Endothelial cell of umbilical vein (primary cell): ENCODE measurements at regions of chr3 and their contacts with region 1.

Region 1: GRCh38 chr3:128584412-128585020 is 66.1 kb downstream of the RPN1 start:
- DNase-seq: peak; percentile 83
- H3K4me3 ChIP-seq: no peak overlapping the region
- H3K27ac ChIP-seq: no peak overlapping the region
- H3K4me1 ChIP-seq: no peaks in the 10 kb centered on the region
- H3K27me3 ChIP-seq: peaks cover 8 to 19% of the 10 kb centered on the region in 2 experiments
- CTCF ChIP-seq: peak; percentile 90 to 92
- POLR2A ChIP-seq: no peak

Region 2: DNA sequence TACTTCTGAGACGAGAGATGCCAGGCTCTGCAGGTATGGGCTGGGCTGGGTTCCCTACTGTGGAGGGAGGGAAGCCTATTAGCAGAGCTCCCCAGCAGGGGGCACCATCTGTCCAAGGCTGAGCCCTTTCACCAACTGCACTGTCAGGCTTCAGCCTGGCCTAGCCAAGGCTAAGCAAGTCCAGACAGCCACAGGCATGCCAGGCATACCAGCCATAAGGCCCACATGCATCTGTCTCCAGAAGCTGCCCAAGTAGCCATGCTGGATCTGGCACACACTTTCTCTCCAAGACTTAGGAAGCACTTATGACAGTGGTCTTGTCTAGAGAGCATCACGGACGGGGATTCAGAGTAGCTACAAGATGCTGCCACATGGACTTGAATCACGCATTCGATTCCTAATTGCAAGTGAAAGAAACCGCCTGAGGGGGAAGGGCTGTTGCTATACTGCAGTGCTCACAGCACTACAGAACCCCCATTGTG is 489.3 kb before region 1 on chr3:
- CTCF ChIA-PET with region 1: interaction called, 13 read pairs
- POLR2A ChIA-PET with region 1: no interaction called
- dilution Hi-C with region 1: no loop called
- intact Hi-C with region 1: no loop called
- DNase-seq: peak; percentile 83
- H3K4me3 ChIP-seq: no peak overlapping the region
- H3K27ac ChIP-seq: peak overlapping the region; percentile 30
- H3K4me1 ChIP-seq: peaks cover 15% of the 10 kb centered on the region
- H3K27me3 ChIP-seq: no peaks in the 10 kb centered on the region
- CTCF ChIP-seq: peak; percentile 89 to 92
- POLR2A ChIP-seq: no peak

Region 3: DNA sequence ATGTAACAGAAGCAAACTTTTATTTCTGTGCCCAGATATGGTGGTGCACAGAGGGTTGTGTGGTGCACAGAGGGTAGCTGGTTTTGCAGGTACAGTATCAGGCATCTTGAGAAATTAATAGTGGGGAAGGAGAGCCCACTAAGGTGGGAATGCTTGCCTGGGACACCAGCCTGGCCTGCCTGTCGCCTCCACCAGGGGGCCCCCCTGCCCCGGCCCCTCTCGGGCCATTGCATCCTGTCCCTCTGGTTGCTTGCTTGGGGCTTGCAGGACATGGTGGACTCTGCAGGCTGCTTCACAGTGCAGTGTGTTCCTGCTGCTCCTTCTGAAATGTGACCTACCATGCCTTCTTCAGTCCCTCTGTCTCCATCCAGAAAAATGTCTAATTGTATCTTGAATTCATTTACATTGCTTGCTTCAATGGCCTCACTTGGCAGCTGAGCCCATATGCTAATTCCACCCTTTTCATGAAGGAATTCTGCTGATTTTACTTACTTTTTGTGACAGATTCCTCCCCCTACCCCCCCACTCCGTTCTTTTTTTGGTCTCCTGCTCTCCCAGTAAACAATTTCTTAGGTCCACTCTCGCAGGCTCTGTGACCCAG is 357.6 kb before region 1 on chr3:
- CTCF ChIA-PET with region 1: interaction called, 16 read pairs
- POLR2A ChIA-PET with region 1: no interaction called
- dilution Hi-C with region 1: no loop called
- intact Hi-C with region 1: loop called (anchors 1 kb)
- DNase-seq: peak; percentile 59
- H3K4me3 ChIP-seq: no peak overlapping the region
- H3K27ac ChIP-seq: no peak overlapping the region
- H3K4me1 ChIP-seq: no peaks in the 10 kb centered on the region
- H3K27me3 ChIP-seq: no peaks in the 10 kb centered on the region
- CTCF ChIP-seq: peak; percentile 89 to 98
- POLR2A ChIP-seq: no peak

Region 4: DNA sequence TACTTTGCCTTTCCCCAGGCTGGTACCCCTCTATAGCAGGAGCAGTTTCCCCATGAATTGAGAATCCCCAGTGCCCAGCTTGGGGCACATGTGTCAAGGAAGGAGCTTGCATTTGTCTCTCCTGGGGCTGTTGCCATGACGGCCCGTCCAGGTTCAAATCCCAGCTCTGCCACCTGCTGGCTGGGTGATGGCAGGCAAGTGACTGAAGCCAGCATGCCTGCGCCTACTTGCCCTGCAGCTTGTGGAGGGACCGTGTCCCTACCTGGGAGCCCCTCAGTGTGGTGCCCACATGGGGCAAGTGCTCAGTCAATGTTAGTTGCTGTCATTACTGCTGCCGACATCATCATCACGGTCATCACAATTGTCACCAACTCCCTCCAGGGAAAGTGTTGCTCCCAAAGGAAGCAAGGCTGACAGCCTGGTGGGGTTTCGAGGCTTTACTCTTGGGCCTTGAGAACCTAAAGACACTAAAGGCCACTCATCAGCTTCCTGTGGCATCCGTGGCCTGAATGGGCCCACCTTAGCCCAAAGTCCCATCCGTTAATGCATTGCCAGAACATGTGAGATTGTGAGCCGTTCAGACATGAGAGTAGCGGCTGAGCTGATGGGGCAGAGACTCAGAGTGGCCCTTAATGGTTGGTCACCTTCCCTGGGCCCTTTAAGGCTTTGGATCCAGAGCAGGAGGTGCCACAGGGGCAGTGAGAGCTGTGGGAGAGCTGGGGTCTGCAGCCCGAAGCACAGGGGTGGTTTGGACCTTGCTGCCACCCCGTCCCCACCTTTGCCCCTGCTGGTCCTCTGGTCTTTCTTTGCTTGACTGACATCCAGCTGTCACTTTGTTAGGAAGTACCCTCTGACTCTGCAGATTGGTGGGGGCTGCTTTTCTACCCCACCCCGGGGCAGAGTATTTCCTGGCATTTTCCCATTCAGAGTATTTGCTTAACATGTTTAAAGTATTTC is 262.2 kb before region 1 on chr3:
- CTCF ChIA-PET with region 1: interaction called, 7 read pairs
- POLR2A ChIA-PET with region 1: no interaction called
- dilution Hi-C with region 1: no loop called
- intact Hi-C with region 1: loop called (anchors 10 kb)
- DNase-seq: peak; percentile 42
- H3K4me3 ChIP-seq: no peak overlapping the region
- H3K27ac ChIP-seq: no peak overlapping the region
- H3K4me1 ChIP-seq: no peaks in the 10 kb centered on the region
- H3K27me3 ChIP-seq: no peaks in the 10 kb centered on the region
- CTCF ChIP-seq: peak; percentile 59 to 75
- POLR2A ChIP-seq: no peak

Region 5: GRCh38 chr3:128482666-128483656 is 101.6 kb before region 1 on chr3:
- CTCF ChIA-PET with region 1: interaction called, 19 read pairs
- POLR2A ChIA-PET with region 1: no interaction called
- dilution Hi-C with region 1: no loop called
- intact Hi-C with region 1: loop called (anchors 1 kb)
- DNase-seq: peak; percentile 99
- H3K4me3 ChIP-seq: peak overlapping the region in 2 of 3 experiments; percentile 77 to 95
- H3K27ac ChIP-seq: peak overlapping the region; percentile 97
- H3K4me1 ChIP-seq: peaks cover 52% of the 10 kb centered on the region
- H3K27me3 ChIP-seq: no peaks in the 10 kb centered on the region
- CTCF ChIP-seq: peak in 1 of 2 donors; percentile 8
- POLR2A ChIP-seq: peak; percentile 89

Region 6: GRCh38 chr3:128497387-128498126 is 87.0 kb before region 1 on chr3:
- CTCF ChIA-PET with region 1: interaction called, 20 read pairs
- POLR2A ChIA-PET with region 1: no interaction called
- dilution Hi-C with region 1: no loop called
- intact Hi-C with region 1: loop called (anchors 1 kb)
- DNase-seq: peak; percentile 52
- H3K4me3 ChIP-seq: peak overlapping the region in 2 of 3 experiments; percentile 16 to 33
- H3K27ac ChIP-seq: no peak overlapping the region
- H3K4me1 ChIP-seq: peaks cover 13% of the 10 kb centered on the region
- H3K27me3 ChIP-seq: no peaks in the 10 kb centered on the region
- CTCF ChIP-seq: peak; percentile 65 to 81
- POLR2A ChIP-seq: no peak

Region 7: DNA sequence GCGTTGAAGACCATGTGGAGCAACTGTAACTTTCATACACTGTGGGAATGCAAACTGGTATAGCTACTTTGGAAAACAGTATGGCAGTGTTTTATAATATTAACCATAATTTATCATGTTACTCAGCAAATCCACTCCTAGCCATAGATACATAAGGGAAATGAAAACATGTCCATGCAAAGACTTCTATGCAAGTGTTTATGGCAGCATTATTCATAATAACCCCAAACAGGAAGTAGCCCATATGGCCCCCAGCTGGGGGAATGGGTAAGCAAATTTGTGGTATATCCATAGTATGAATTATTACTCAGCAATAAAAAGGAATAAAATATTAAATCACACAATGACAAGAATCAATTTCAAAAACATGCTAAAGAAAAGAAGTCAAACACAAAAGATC is 68.5 kb before region 1 on chr3:
- CTCF ChIA-PET with region 1: no interaction called
- POLR2A ChIA-PET with region 1: no interaction called
- dilution Hi-C with region 1: no loop called
- intact Hi-C with region 1: no loop called
- DNase-seq: no peak
- H3K4me3 ChIP-seq: no peak overlapping the region
- H3K27ac ChIP-seq: no peak overlapping the region
- H3K4me1 ChIP-seq: no peaks in the 10 kb centered on the region
- H3K27me3 ChIP-seq: peaks cover 25 to 35% of the 10 kb centered on the region in 2 experiments
- CTCF ChIP-seq: no peak
- POLR2A ChIP-seq: no peak

Region 8: GRCh38 chr3:128835096-128835495 is 250.6 kb after region 1 on chr3:
- CTCF ChIA-PET with region 1: no interaction called
- POLR2A ChIA-PET with region 1: no interaction called
- dilution Hi-C with region 1: no loop called
- intact Hi-C with region 1: no loop called
- DNase-seq: no peak
- H3K4me3 ChIP-seq: no peak overlapping the region
- H3K27ac ChIP-seq: no peak overlapping the region
- H3K4me1 ChIP-seq: no peaks in the 10 kb centered on the region
- H3K27me3 ChIP-seq: no peaks in the 10 kb centered on the region
- CTCF ChIP-seq: no peak
- POLR2A ChIP-seq: no peak

Region 9: DNA sequence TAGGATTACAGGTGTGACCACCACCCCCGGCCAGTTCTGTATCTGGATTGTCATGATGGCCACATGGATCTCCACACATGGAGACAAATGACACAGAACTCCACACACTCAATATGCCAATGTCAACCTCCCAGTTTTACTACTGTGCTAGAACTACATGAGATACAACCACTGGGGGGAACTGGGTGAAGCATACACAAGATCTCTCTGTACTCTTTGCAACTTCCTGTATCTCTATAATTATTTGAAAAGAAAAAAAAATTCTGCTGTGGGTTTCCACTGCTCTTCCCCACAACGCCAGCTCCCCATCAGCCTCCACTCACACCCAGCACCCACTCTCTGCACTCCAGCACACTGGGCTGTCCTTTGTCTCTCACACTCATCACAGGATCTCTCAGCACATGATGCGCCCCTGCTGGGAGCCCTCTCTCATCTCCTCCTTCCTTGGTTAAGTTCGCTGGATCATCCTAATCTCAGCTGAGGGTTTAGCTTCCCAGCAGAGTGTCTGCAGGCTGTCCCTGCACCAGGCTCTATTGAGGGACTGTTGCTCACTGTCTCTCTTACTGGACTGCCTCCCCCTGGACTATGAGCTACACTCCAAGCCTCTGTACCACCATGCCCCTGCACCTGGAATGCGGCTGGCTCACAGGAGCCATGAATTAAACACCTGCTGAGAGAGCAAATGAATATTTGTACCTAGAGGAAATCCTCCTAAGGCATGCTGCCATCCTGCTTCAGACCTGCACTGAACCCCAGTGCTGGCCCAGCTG is 547.8 kb after region 1 on chr3:
- CTCF ChIA-PET with region 1: no interaction called
- POLR2A ChIA-PET with region 1: no interaction called
- dilution Hi-C with region 1: no loop called
- intact Hi-C with region 1: no loop called
- DNase-seq: no peak
- H3K4me3 ChIP-seq: no peak overlapping the region
- H3K27ac ChIP-seq: no peak overlapping the region
- H3K4me1 ChIP-seq: no peaks in the 10 kb centered on the region
- H3K27me3 ChIP-seq: no peaks in the 10 kb centered on the region
- CTCF ChIP-seq: no peak
- POLR2A ChIP-seq: no peak